ENCODE measurements at regions of chr10 and their contacts with region 1.

Region 1: GRCh38 chr10:119859420-119860258 is 13.0 kb downstream of the MCMBP start:
- DNase-seq: peak; percentile 69
- ATAC-seq: peak; percentile 59
- H3K4me3 ChIP-seq: no peak overlapping the region
- H3K27ac ChIP-seq: no peak overlapping the region
- H3K4me1 ChIP-seq: no peaks in the 10 kb centered on the region; the same call in 1 of the 2 replicates
- H3K27me3 ChIP-seq: no peaks in the 10 kb centered on the region
- CTCF ChIP-seq: peak; percentile 70
- POLR2A ChIP-seq: no peak
- RAD21 ChIP-seq: peak; percentile 80

Region 2: GRCh38 chr10:119608316-119609155 is 251.1 kb before region 1 on chr10:
- CTCF ChIA-PET with region 1: interaction called, 5 read pairs
- POLR2A ChIA-PET with region 1: no interaction called
- dilution Hi-C with region 1: no loop called
- in situ Hi-C with region 1: no loop called
- intact Hi-C with region 1: loop called (anchors 1 kb)
- DNase-seq: peak; percentile 35
- ATAC-seq: peak; percentile 97
- H3K4me3 ChIP-seq: no peak overlapping the region
- H3K27ac ChIP-seq: no peak overlapping the region
- H3K4me1 ChIP-seq: no peaks in the 10 kb centered on the region
- H3K27me3 ChIP-seq: no peaks in the 10 kb centered on the region; the same call in 1 of the 2 replicates
- CTCF ChIP-seq: peak; percentile 73
- POLR2A ChIP-seq: no peak
- RAD21 ChIP-seq: peak; percentile 75

Region 3: DNA sequence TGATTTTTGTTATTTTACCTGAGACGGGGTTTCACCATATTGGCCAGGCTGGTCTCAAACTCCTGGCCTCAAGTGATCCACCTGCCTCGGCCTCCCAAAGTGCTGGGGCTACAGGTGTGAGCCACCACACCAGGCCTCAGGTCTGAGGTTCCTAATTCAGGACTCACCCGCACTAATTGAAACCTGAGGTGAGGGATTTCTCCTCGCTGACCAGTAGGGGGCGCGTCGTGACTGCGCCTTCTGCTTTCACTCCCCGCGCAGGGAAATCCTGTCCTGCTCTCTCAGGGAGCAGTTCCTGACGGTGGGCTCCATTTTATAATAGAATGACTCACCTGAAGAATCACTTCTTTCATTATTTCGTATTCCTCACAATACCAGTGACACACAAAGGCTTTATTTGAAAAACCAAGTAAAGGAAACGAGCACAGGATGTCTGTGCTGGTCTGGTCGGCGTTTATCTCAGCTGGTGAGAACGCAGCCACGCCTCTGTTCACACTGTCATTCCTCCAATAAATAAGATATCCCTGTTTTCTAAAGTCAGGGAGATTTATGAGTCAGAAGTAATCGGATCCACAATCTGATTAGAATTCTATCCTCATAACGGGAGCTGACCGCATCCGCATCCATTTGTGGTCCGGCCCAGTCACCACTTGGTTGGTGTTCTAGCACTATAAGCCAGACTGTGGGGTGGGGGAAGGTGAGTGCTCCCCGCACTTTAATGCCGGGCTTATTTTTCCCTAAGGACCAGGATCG is 173.0 kb before region 1 on chr10:
- CTCF ChIA-PET with region 1: interaction called, 5 read pairs
- POLR2A ChIA-PET with region 1: no interaction called
- dilution Hi-C with region 1: no loop called
- in situ Hi-C with region 1: loop called (anchors 5 kb)
- intact Hi-C with region 1: loop called (anchors 1 kb)
- DNase-seq: peak; percentile 89
- ATAC-seq: peak; percentile 91
- H3K4me3 ChIP-seq: peak overlapping the region; percentile 30; the same call in 1 of the 2 replicates
- H3K27ac ChIP-seq: no peak overlapping the region
- H3K4me1 ChIP-seq: peaks cover 2% of the 10 kb centered on the region
- H3K27me3 ChIP-seq: no peaks in the 10 kb centered on the region
- CTCF ChIP-seq: peak; percentile 93
- POLR2A ChIP-seq: no peak
- RAD21 ChIP-seq: peak; percentile 91

Region 4: DNA sequence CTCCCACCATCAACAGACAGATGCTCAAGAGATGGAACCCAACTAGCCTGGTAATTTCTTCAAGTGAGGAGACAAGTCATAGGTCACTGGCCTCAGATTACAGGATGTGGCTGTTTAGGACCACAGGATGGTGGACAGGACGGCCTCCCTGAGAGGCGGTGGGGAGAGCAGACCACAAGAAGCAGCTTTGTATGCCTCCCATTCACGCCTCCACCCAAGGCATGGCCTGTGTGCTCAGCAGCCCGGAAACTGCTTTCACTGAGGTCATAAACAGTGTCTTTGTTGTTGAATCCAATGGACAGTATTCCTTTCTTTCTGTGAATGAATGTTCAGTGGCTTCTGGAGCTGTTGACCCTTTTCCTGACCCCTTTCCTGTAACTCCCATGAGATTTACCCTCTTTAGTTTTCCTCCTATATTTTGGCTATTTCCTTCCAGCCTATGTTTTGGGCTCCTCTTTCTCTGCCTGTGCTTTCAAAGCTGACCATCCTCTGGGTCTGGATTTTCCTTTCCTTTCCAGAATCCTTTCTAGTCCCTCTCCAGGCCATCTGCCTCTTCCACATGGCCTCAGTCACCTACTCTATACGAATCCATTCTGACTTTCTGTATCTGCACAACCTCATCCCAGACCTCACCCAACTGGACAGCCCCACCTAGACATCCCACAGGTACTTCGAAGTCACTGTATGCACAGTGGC is 166.2 kb before region 1 on chr10:
- CTCF ChIA-PET with region 1: interaction called, 3 read pairs
- POLR2A ChIA-PET with region 1: no interaction called
- dilution Hi-C with region 1: no loop called
- in situ Hi-C with region 1: loop called (anchors 5 kb)
- intact Hi-C with region 1: no loop called
- DNase-seq: no peak
- ATAC-seq: no peak
- H3K4me3 ChIP-seq: no peak overlapping the region
- H3K27ac ChIP-seq: no peak overlapping the region
- H3K4me1 ChIP-seq: no peaks in the 10 kb centered on the region
- H3K27me3 ChIP-seq: peaks cover 6% of the 10 kb centered on the region
- CTCF ChIP-seq: no peak
- POLR2A ChIP-seq: no peak
- RAD21 ChIP-seq: no peak

Region 5: DNA sequence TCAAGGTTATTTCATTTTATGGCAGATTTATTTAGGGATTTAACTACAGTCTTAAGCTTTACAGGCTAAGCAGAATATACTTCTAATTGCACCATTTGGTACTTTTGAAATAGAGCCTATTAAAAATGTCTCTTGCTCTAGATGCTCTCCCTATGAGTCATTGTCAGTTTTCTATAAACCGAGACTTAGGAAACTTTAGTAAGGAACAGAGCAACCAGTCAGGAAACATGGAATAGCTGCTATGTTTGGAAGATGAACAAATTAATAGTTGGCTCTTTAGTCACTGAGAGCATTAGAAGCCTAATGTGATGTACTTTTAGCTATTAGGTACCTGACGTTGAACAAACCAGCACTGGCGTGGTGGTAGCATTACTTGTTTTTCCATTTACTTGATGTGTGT is 98.5 kb before region 1 on chr10:
- CTCF ChIA-PET with region 1: interaction called, 12 read pairs
- POLR2A ChIA-PET with region 1: no interaction called
- dilution Hi-C with region 1: no loop called
- in situ Hi-C with region 1: no loop called
- intact Hi-C with region 1: no loop called
- DNase-seq: peak; percentile 94
- ATAC-seq: peak; percentile 88
- H3K4me3 ChIP-seq: no peak overlapping the region
- H3K27ac ChIP-seq: no peak overlapping the region
- H3K4me1 ChIP-seq: peaks cover 10% of the 10 kb centered on the region
- H3K27me3 ChIP-seq: no peaks in the 10 kb centered on the region
- CTCF ChIP-seq: no peak
- POLR2A ChIP-seq: no peak
- RAD21 ChIP-seq: no peak

Region 6: GRCh38 chr10:120262857-120263547 is 403.4 kb after region 1 on chr10:
- CTCF ChIA-PET with region 1: no interaction called
- POLR2A ChIA-PET with region 1: no interaction called
- dilution Hi-C with region 1: no loop called
- in situ Hi-C with region 1: no loop called
- intact Hi-C with region 1: no loop called
- DNase-seq: no peak
- ATAC-seq: no peak
- H3K4me3 ChIP-seq: no peak overlapping the region
- H3K27ac ChIP-seq: no peak overlapping the region
- H3K4me1 ChIP-seq: no peaks in the 10 kb centered on the region
- H3K27me3 ChIP-seq: no peaks in the 10 kb centered on the region
- CTCF ChIP-seq: no peak
- POLR2A ChIP-seq: no peak
- RAD21 ChIP-seq: no peak

Measured in IMR-90 (cell line).